Tibial artery (tissue), 4 donors: ENCODE measurements at regions of chr14 and their contacts with region 1.

Region 1: DNA sequence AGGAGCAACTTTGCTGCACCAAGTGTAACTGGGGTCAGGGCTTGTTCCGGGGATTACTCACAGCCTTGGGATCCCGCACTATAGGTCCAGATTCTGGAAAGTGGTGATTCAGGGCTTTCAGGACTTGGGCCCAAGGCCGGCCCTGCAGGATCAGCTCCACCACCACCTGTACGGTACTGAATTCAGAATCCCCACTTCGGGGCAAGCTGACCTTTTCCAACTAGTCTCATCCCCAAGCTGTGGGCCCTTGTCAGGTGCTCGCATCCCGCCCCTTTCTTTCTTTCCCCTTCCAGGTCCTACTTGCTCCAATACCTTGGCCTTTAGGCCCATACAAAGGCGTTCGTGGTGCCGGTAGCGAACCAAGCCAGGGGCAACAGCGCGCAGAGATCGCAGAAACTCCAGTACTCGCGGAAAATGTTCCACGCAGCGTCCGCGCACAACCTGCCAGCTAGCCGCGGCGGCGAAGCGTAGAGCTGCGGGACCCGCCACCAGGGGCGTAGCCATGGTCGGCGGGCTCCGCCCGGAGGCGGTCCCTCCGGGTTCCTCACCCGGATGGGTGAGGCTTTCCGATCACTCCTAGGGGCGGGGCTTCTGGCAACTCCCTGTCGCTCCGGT is 487 bp downstream of the TINF2 start:
- DNase-seq: peak; percentile 73 to 90
- H3K4me3 ChIP-seq: peak overlapping the region; percentile 68 to 90
- H3K27ac ChIP-seq: peak overlapping the region; percentile 92 to 93
- H3K4me1 ChIP-seq: peaks cover 0 to 45% (median 33%) of the 10 kb centered on the region in 4 donors
- H3K27me3 ChIP-seq: no peaks in the 10 kb centered on the region
- CTCF ChIP-seq: peak; percentile 54 to 66

Region 2: DNA sequence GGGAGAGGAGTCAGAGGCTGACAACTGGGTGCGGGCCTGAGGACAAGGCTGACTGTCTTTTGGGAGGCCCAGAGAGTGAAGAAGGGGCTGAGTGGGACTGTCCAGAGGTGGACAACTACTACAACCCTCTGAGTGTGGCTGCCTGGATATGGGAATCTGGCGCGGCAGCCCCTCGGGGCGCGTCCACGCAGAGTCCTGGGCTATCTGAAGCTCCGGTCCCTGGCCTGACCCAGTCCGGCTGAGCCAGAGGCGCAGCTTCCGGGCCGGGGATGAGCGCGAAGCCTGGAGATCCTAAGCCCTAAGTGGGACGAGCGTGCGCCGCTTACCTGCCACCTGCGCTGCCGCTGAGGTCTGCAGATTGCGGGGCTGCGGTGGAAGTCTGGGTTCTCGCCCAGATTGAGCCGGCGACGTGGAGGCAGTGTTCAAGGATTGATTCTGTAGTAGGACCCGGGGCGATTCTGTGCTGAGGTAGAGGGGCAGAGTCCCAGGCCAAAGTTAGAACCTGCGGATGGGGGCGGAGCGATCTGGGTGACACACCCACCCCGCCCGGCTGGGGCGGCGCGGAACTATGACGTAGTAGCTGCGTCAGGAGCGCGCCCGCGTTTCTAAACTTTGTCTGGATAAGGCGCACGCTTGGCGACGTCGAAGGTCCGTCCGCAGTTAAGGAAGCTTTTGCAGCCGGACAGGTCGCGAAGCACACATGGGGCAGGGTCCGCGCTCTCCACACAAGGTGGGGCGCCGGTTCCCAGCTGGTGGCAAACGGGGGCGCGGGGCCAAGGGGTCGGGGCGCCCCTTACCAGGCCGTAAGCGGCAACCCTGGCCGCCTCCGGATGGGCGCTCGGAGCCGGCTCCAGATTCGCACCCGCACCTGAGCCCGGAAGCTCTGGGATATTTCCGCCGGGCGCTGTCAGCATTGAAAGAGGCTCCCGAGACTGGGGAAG is 57.6 kb after region 1 on chr14 and contains the starts of genes DHRS1 and NOP9:
- intact Hi-C with region 1: loop called (anchors 5 kb)
- DNase-seq: peak; percentile 89 to 92
- H3K4me3 ChIP-seq: peak within 1 kb of the TSS; percentile 91 to 96
- H3K27ac ChIP-seq: peak within 1 kb of the TSS; percentile 76 to 85
- H3K4me1 ChIP-seq: peaks cover 0 to 34% (median 25%) of the 10 kb centered on the region in 4 donors
- H3K27me3 ChIP-seq: no peaks in the 10 kb centered on the region
- CTCF ChIP-seq: no peak

Region 3: DNA sequence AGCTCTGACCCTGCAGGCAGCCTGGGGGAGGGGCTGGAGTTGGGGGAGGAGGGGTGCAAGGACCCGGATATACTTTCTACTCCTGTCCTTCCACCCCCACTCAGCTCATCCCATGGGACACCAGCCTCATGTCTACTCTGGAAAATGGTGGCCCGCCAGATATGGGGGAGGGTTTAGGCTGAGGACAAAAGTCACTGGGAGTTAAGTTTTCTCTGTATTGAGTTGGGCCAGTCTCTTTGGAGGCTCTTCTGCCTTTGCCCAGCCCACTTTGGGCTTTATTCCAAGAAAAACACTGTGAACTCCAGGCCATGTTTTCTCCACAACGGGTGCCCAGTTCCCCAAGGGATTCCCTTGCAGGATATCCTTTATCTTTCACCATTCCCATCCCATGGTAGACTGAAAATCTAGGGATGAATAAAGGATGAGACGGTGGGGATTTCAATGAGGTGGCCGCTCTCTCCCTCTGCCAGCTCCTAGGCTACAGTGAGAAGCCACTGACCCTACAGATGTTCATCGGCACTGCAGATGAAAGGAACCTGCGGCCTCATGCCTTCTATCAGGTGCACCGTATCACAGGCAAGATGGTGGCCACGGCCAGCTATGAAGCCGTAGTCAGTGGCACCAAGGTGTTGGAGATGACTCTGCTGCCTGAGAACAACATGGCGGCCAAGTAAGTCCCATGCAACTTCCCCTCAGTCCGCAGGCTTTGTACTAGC is 130.9 kb after region 1 on chr14:
- intact Hi-C with region 1: loop called (anchors 5 kb)
- DNase-seq: no peak
- H3K4me3 ChIP-seq: no peak overlapping the region
- H3K27ac ChIP-seq: peak overlapping the region in 1 of 2 donors; percentile 36
- H3K4me1 ChIP-seq: peaks cover 0 to 32% (median 16%) of the 10 kb centered on the region in 4 donors
- H3K27me3 ChIP-seq: no peaks in the 10 kb centered on the region
- CTCF ChIP-seq: no peak